ENCODE measurements at regions of chr12 and their contacts with region 1.

Region 1: GRCh38 chr12:104720339-104721038 is 237.6 kb downstream of the SLC41A2 start:
- DNase-seq: peak; percentile 43 to 92 (median 73)
- ATAC-seq: peak; percentile 77
- H3K4me3 ChIP-seq: peak overlapping the region; percentile 42 to 53
- H3K4me3 Mint-ChIP-seq: peak overlapping the region; percentile 67
- H3K27ac ChIP-seq: peak overlapping the region; percentile 61 to 71
- H3K27ac Mint-ChIP-seq: peak overlapping the region; percentile 87
- H3K4me1 ChIP-seq: peaks cover 49% of the 10 kb centered on the region
- H3K4me1 Mint-ChIP-seq: peaks cover 71% of the 10 kb centered on the region
- H3K27me3 ChIP-seq: no peaks in the 10 kb centered on the region
- H3K27me3 Mint-ChIP-seq: no peaks in the 10 kb centered on the region
- CTCF ChIP-seq: no peak

Region 2: DNA sequence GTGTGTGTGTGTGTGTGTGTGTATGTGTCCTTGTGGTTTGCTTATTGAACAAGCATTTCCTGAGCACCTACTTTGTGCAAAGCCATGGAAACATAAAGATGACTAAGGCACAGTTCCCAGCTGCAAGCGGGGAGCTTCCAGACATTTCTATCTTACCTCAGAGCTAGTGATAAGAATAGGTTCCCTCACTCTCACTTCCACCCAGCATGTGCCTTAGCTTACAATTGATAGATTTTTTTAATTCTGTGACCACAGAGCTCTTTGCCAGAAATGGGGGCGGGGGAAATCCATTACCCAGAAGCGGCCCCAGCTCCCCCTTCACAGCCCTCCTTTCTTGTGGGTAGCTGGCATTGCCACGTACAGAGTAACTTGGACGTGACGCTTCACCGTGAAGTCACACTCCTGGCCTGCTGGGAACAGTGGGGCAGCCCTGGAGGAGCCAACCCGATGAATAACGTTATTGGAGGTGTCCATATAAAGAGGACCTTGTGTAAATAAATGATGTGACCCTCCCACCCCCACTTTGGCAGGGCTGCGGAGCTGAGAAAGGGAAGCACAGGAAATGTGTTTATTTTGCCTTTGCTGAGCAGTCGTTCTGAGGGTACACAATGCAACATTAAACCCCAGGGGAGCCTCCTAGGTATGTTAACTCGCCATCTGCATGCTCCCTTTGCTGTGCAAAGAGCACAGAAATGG is 24.9 kb before region 1 on chr12:
- CTCF ChIA-PET with region 1: interaction called, 3 read pairs
- POLR2A ChIA-PET with region 1: interaction called, 8 read pairs
- intact Hi-C with region 1: loop called in 1 of 2 experiments (anchors 2 kb)
- DNase-seq: peak in 7 of 9 experiments; percentile 34 to 91 (median 65)
- ATAC-seq: peak; percentile 94
- H3K4me3 ChIP-seq: no peak overlapping the region
- H3K4me3 Mint-ChIP-seq: peak overlapping the region; percentile 32
- H3K27ac ChIP-seq: no peak overlapping the region
- H3K27ac Mint-ChIP-seq: peak overlapping the region; percentile 70
- H3K4me1 ChIP-seq: peaks cover 25% of the 10 kb centered on the region
- H3K4me1 Mint-ChIP-seq: peaks cover 58% of the 10 kb centered on the region
- H3K27me3 ChIP-seq: no peaks in the 10 kb centered on the region
- H3K27me3 Mint-ChIP-seq: no peaks in the 10 kb centered on the region
- CTCF ChIP-seq: no peak

Region 3: DNA sequence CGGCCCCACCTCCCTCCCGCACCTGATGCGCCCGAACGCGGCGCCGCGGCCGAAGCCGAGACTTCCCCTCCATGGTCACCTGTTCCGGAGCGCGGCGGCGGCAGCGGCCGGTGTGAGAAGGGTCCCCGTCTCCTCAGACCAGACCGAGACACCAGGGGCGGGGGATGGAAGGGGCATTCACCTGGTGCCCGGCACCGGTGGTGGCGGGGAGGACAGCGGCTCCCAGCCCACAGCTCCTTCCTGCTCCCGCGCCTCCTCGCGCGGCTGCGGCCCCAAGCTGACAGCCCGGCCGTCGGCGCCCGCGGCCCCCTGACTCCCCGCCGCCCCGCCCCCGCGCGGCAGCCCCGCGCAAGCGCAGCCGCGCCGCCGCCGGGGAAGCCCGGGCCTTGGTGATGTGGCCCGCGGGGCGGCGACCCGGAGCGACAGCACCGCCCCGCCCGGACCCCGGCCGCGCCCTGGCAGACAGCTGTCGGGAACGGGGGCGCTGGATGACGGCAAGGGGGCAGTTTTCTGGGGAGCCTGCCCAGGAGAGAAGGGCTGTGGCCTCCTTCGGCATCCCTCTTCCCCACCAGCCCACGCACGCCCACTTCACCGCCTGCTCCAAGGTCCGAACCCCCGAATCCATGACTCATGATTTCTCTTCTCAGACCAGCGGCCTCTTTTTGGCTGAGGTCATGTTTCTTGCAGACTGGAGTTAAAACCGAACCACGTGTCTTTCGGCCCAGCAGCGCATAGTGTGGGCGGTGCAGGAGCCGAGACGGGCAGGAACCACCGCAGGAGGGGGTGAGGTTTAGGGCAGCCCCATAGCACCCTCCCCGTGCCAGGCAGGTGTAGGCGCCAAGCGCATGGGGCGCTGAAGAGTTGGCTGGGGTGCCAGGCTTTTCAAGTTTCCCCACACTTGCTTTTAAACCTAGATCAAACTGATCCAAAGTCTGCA is 237.8 kb after region 1 on chr12 and contains the start of gene SLC41A2:
- CTCF ChIA-PET with region 1: no interaction called
- POLR2A ChIA-PET with region 1: no interaction called
- intact Hi-C with region 1: loop called in 1 of 2 experiments (anchors 5 kb)
- DNase-seq: peak; percentile 52 to 90 (median 76)
- ATAC-seq: peak; percentile 90
- H3K4me3 ChIP-seq: peak within 1 kb of the TSS; percentile 61 to 97
- H3K4me3 Mint-ChIP-seq: peak within 1 kb of the TSS; percentile 94
- H3K27ac ChIP-seq: peak within 1 kb of the TSS; percentile 40 to 42
- H3K27ac Mint-ChIP-seq: peak within 1 kb of the TSS; percentile 85
- H3K4me1 ChIP-seq: peaks cover 13% of the 10 kb centered on the region
- H3K4me1 Mint-ChIP-seq: peaks cover 19% of the 10 kb centered on the region
- H3K27me3 ChIP-seq: no peaks in the 10 kb centered on the region
- H3K27me3 Mint-ChIP-seq: peaks cover 17% of the 10 kb centered on the region
- CTCF ChIP-seq: no peak
- total RNA-seq, gene SLC41A2: 3.4 to 4.2 TPM

Measured in CD8-positive, alpha-beta T cell (primary cell).